Calu3 (cell line): ENCODE measurements at regions of chr3 and their contacts with region 1.

Region 1: DNA sequence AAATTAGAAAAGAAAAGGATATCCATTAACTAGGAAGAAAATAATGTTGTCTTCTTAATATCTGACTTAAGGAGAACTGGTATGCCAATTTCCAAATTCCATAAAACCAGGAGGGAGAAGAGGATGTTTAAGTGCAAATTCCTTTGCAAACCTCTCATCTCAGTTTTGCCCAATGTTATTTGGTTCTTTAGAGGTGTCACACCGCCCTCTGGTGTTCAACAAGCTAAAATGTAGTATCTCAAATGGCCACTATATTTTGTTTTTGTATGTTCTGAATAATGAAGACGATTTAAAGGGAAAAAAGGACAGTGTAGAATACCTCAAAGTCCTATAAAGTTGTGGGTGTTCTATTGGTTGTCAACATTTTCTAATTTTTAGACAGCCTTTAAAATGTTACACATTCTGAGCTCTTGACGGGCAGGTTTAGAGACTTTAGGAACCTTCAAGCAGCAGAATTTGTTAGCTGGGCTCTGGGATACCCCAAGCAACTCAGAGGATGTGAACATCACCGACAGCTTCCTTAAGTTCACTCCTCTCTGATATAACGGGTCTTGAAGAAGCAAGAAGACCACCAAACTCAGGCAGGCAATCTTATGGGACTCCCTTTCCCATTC is 458.3 kb downstream of the MFSD1 start:
- DNase-seq: peak; percentile 78
- H3K4me3 Mint-ChIP-seq: no peak overlapping the region
- H3K27ac Mint-ChIP-seq: no peak overlapping the region
- H3K4me1 Mint-ChIP-seq: no peaks in the 10 kb centered on the region
- H3K27me3 Mint-ChIP-seq: peaks cover 15% of the 10 kb centered on the region
- CTCF ChIP-seq: peak; percentile 78

Region 2: DNA sequence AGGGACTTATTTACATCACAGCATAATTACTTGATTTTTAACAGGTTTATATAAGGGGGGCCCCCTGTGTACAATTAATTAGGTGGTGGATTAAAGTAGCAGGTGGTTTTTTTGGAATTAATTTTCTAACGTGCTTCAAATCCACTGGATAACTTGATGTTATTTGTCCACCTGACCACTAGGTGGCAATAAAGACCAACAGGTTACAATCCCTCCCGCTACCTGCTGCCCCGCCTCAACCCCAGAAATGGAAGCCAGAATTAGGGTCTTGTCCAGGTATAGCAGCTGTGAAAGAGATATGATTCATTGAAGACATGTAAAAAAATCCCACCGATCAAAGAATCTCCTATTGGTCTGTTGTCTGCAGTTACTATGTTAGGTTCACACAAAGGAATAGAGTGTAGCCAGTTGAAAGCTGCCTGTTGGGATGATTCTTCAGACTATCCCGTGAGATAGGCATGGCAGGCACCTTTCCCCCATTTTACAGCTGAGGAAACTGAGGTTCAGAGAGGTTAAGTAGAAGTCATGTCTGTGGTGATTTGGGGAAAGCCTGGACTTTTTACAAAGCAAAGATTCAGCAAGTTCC is 414.3 kb before region 1 on chr3:
- CTCF ChIA-PET with region 1: interaction called, 34 read pairs
- intact Hi-C with region 1: loop called (anchors 1 kb)
- DNase-seq: peak; percentile 65
- H3K4me3 Mint-ChIP-seq: no peak overlapping the region
- H3K27ac Mint-ChIP-seq: no peak overlapping the region
- H3K4me1 Mint-ChIP-seq: no peaks in the 10 kb centered on the region
- H3K27me3 Mint-ChIP-seq: no peaks in the 10 kb centered on the region
- CTCF ChIP-seq: peak; percentile 93

Region 3: GRCh38 chr3:159458010-159458409 is 197.9 kb after region 1 on chr3:
- CTCF ChIA-PET with region 1: interaction called, 3 read pairs
- intact Hi-C with region 1: loop called (anchors 2 kb)
- DNase-seq: peak; percentile 88
- H3K4me3 Mint-ChIP-seq: peak overlapping the region; percentile 55
- H3K27ac Mint-ChIP-seq: peak overlapping the region; percentile 86
- H3K4me1 Mint-ChIP-seq: peaks cover 73% of the 10 kb centered on the region
- H3K27me3 Mint-ChIP-seq: no peaks in the 10 kb centered on the region
- CTCF ChIP-seq: no peak

Region 4: GRCh38 chr3:159586571-159587202 is 326.5 kb after region 1 on chr3:
- CTCF ChIA-PET with region 1: interaction called, 10 read pairs
- intact Hi-C with region 1: loop called (anchors 1 kb)
- DNase-seq: peak; percentile 61
- H3K4me3 Mint-ChIP-seq: no peak overlapping the region
- H3K27ac Mint-ChIP-seq: no peak overlapping the region
- H3K4me1 Mint-ChIP-seq: peaks cover 9% of the 10 kb centered on the region
- H3K27me3 Mint-ChIP-seq: peaks cover 23% of the 10 kb centered on the region
- CTCF ChIP-seq: peak; percentile 80

Region 5: GRCh38 chr3:159884661-159885402 is 624.7 kb after region 1 on chr3:
- CTCF ChIA-PET with region 1: interaction called, 5 read pairs
- intact Hi-C with region 1: loop called (anchors 10 kb)
- DNase-seq: peak; percentile 17
- H3K4me3 Mint-ChIP-seq: no peak overlapping the region
- H3K27ac Mint-ChIP-seq: no peak overlapping the region
- H3K4me1 Mint-ChIP-seq: no peaks in the 10 kb centered on the region
- H3K27me3 Mint-ChIP-seq: no peaks in the 10 kb centered on the region
- CTCF ChIP-seq: peak; percentile 75